ENCODE measurements at regions of chr10 and their contacts with region 1.

Region 1: GRCh38 chr10:42866115-42866995 is 83.8 kb downstream of the BMS1 start:
- DNase-seq: peak; percentile 72
- H3K4me3 ChIP-seq: peak overlapping the region; percentile 36
- H3K27ac ChIP-seq: no peak overlapping the region
- H3K4me1 ChIP-seq: no peaks in the 10 kb centered on the region
- H3K27me3 ChIP-seq: no peaks in the 10 kb centered on the region
- CTCF ChIP-seq: peak; percentile 71

Region 2: GRCh38 chr10:42769653-42770052 is 96.7 kb before region 1 on chr10:
- CTCF ChIA-PET with region 1: no interaction called
- POLR2A ChIA-PET with region 1: no interaction called
- intact Hi-C with region 1: no loop called
- DNase-seq: no peak
- H3K4me3 ChIP-seq: no peak overlapping the region
- H3K27ac ChIP-seq: no peak overlapping the region
- H3K4me1 ChIP-seq: no peaks in the 10 kb centered on the region
- H3K27me3 ChIP-seq: peaks cover 5% of the 10 kb centered on the region
- CTCF ChIP-seq: no peak

Region 3: DNA sequence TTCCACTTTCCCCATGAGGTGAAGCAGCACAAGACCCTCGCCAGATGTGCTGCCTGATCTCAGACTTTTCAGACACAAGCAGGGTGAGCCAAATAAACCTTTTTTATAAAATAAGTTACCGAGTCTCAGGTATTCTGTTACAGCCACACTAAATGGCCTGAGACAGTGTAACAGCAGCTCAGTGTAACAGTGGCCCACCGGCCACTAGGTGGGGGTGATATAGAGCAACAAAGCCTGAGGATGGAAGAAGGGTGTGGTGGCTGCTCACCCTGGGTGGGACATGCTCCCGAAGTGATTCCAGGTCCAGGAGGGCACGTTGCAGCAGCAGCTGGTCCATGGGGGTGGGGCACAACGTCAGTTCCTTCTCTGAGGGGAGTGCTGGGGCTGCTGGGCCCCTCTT is 39.2 kb before region 1 on chr10:
- CTCF ChIA-PET with region 1: no interaction called
- POLR2A ChIA-PET with region 1: no interaction called
- intact Hi-C with region 1: no loop called
- DNase-seq: peak; percentile 9
- H3K4me3 ChIP-seq: no peak overlapping the region
- H3K27ac ChIP-seq: no peak overlapping the region
- H3K4me1 ChIP-seq: no peaks in the 10 kb centered on the region
- H3K27me3 ChIP-seq: no peaks in the 10 kb centered on the region
- CTCF ChIP-seq: 0 out of 2 replicates have a peak, but pooled peaks have one; percentile 23

Region 4: GRCh38 chr10:42903325-42903724 is 37.0 kb after region 1 on chr10:
- CTCF ChIA-PET with region 1: no interaction called
- POLR2A ChIA-PET with region 1: no interaction called
- intact Hi-C with region 1: no loop called
- DNase-seq: no peak
- H3K4me3 ChIP-seq: no peak overlapping the region
- H3K27ac ChIP-seq: no peak overlapping the region
- H3K4me1 ChIP-seq: no peaks in the 10 kb centered on the region
- H3K27me3 ChIP-seq: no peaks in the 10 kb centered on the region
- CTCF ChIP-seq: no peak

Region 5: GRCh38 chr10:43078987-43079275 is 212.6 kb after region 1 on chr10:
- CTCF ChIA-PET with region 1: interaction called, 7 read pairs
- POLR2A ChIA-PET with region 1: no interaction called
- intact Hi-C with region 1: loop called (anchors 1 kb)
- DNase-seq: peak; percentile 81
- H3K4me3 ChIP-seq: peak overlapping the region; percentile 56
- H3K27ac ChIP-seq: no peak overlapping the region
- H3K4me1 ChIP-seq: peaks cover 28% of the 10 kb centered on the region
- H3K27me3 ChIP-seq: peaks cover 3% of the 10 kb centered on the region
- CTCF ChIP-seq: peak; percentile 85

Region 6: GRCh38 chr10:43093423-43094076 is 227.2 kb after region 1 on chr10:
- CTCF ChIA-PET with region 1: no interaction called
- POLR2A ChIA-PET with region 1: no interaction called
- intact Hi-C with region 1: loop called (anchors 5 kb)
- DNase-seq: peak; percentile 79
- H3K4me3 ChIP-seq: no peak overlapping the region
- H3K27ac ChIP-seq: no peak overlapping the region
- H3K4me1 ChIP-seq: peaks cover 25% of the 10 kb centered on the region
- H3K27me3 ChIP-seq: no peaks in the 10 kb centered on the region
- CTCF ChIP-seq: peak; percentile 51

Region 7: DNA sequence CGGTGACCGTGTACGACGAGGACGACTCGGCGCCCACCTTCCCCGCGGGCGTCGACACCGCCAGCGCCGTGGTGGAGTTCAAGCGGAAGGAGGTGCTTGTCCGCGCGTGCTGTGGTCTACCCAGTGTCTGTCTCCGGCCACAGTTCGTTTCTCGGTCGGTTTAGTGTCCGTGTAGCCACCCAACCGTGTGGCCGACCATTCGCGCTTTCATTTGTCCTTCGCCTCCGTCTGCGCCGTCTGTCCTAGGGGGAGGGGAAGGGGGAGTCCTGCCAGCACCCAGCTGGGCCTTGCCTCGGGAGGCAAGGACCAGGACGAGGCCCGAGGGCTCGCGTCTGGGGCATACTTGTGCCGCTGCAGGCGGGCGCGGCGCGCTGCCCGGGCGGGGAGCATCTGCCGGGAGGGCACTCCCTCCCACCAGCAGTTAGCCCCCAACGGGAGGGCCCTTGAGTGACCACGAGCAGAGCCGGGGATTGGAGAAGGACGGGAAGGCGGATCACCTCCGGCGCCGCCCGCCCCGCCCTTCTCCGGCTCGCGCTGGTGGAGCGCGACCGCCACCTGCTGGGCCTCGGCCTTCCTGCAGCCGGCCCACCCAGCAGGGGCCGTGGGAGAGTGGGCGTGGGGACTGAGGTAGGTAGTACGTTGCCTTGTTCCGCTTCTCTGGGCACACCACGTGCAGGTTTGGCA is 238.9 kb after region 1 on chr10:
- CTCF ChIA-PET with region 1: no interaction called
- POLR2A ChIA-PET with region 1: no interaction called
- intact Hi-C with region 1: loop called (anchors 1 kb)
- DNase-seq: peak; percentile 82
- H3K4me3 ChIP-seq: peak overlapping the region; percentile 45
- H3K27ac ChIP-seq: no peak overlapping the region
- H3K4me1 ChIP-seq: peaks cover 4% of the 10 kb centered on the region
- H3K27me3 ChIP-seq: no peaks in the 10 kb centered on the region
- CTCF ChIP-seq: peak; percentile 98

Region 8: DNA sequence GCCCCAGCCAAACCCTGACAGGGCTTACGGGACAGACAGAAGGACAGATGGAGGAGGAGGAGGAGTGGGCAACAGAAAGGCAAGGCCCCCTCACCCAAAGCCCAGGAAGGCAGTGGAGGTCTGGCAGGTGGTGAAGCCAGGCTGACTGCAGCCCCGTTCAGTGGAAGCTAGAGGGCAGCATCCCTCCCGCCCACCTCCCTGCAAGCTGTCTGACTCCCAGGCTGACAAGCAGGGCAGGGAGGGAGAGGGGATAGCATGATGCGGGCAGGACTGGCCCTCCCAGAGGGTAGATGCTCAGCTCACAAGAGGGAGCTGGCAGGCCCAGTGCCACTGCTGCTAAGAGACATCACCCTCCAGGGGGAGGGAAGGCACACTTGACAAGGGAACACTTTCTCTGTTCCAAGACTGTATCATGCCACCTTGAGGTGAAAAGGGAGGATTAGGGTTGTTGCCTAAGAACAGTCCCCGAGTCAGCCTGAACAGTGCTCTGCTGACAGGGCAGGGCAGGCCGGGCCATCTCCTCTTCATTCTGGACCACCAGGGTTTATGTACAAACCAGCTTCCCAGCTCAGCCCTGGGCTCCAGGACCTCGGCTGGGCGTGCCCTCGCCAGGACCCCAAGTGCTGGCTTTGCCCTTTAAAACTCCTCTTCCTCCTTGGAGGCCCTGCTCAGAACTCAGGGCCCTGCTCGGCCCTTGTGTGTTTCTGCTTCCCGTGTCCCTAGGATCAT is 338.8 kb after region 1 on chr10:
- CTCF ChIA-PET with region 1: interaction called, 10 read pairs
- POLR2A ChIA-PET with region 1: no interaction called
- intact Hi-C with region 1: loop called (anchors 10 kb)
- DNase-seq: peak; percentile 72
- H3K4me3 ChIP-seq: no peak overlapping the region
- H3K27ac ChIP-seq: no peak overlapping the region
- H3K4me1 ChIP-seq: no peaks in the 10 kb centered on the region
- H3K27me3 ChIP-seq: no peaks in the 10 kb centered on the region
- CTCF ChIP-seq: peak; percentile 86

Region 9: DNA sequence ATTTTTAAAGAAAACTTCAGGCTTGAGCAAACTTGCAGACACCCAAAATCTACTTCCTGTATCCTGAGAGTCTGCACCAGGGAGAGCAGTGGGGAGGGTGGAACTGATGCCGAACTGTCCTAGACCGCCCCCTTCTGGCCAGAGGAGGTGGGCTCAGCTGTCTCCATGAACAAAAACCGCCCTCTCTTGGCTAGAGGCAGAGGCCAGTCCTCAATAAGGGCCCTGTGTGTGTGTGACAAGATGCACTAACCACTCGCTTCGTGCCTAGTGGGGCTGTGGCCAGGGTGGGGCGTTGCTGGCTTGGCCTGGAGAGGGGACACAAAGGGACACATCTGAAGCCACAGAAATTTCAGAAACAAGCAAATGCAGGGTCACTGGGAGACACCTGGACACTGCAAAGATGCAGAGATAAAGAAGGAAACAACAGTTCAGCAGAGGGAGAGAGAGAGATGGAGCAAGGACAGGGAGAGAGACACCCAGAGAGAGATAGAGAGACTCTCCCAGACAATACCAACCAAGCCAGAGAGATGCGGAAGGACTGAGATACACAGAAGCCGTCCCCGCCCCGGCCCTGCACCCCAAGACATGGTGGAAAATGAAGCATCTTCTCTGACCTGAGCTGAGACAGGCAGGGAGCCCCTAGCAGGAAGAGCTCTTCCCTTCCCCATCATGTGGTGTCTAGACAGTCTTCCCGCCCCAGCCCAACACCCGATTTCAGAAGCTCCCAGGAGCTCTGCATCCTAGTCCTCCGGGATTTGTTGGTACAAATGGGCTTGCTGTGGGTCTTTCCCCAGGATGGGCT is 482.4 kb after region 1 on chr10:
- CTCF ChIA-PET with region 1: interaction called, 7 read pairs
- POLR2A ChIA-PET with region 1: no interaction called
- intact Hi-C with region 1: loop called (anchors 5 kb)
- DNase-seq: peak; percentile 86
- H3K4me3 ChIP-seq: no peak overlapping the region
- H3K27ac ChIP-seq: no peak overlapping the region
- H3K4me1 ChIP-seq: peaks cover 2% of the 10 kb centered on the region
- H3K27me3 ChIP-seq: no peaks in the 10 kb centered on the region
- CTCF ChIP-seq: peak; percentile 98